ENCODE measurements at regions of chr4 and their contacts with region 1.

Region 1: DNA sequence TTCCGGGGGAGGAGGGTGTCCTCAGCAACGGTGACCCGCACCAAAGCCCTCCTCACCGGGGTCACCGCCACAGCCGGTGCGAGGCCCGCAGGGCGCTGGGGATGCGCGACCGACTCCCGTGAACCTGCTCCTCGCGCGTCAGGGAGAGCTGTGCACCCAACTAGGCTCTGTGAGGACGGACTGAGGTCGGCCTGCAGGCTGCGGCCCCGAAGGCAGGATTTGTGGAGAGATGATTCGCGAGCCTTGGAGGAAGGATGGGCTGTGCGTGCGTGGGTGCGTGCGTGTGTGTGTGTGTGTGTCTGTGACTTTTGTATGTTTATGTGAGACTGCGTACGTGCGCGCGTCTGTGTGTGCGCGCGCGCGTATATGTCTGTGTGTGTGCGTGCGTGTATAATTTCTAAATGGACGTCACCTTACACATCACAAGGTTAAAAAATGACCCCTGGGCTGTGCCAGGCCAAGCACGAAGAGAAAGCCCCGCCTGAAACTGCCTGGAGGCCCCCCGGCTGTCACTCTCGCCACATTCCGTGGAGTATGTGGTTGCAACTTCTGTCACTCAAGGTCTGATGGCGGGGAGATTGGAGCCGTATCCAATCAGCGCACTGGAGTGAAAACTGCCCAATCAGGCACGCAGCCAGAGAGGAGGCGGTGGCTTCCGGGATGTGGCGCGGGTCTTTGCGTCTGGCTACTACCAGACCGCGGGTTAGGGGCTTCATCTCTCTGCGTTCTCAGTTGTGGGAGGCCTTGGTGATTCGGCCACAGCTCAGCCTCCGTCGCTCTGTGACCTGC is at the start of gene ZNF141:
- DNase-seq: peak; percentile 81 to 97 (median 87)
- ATAC-seq: peak; percentile 87
- H3K4me3 ChIP-seq: peak within 1 kb of the TSS; percentile 98
- H3K4me3 Mint-ChIP-seq: peak within 1 kb of the TSS; percentile 94
- H3K27ac ChIP-seq: peak within 1 kb of the TSS; percentile 85 to 91
- H3K27ac Mint-ChIP-seq: peak within 1 kb of the TSS; percentile 98
- H3K4me1 ChIP-seq: peaks cover 27% of the 10 kb centered on the region
- H3K4me1 Mint-ChIP-seq: peaks cover 51% of the 10 kb centered on the region
- H3K27me3 ChIP-seq: no peaks in the 10 kb centered on the region
- H3K27me3 Mint-ChIP-seq: no peaks in the 10 kb centered on the region
- CTCF ChIP-seq: no peak
- total RNA-seq, gene ZNF141: 13.6 to 13.7 TPM

Region 2: DNA sequence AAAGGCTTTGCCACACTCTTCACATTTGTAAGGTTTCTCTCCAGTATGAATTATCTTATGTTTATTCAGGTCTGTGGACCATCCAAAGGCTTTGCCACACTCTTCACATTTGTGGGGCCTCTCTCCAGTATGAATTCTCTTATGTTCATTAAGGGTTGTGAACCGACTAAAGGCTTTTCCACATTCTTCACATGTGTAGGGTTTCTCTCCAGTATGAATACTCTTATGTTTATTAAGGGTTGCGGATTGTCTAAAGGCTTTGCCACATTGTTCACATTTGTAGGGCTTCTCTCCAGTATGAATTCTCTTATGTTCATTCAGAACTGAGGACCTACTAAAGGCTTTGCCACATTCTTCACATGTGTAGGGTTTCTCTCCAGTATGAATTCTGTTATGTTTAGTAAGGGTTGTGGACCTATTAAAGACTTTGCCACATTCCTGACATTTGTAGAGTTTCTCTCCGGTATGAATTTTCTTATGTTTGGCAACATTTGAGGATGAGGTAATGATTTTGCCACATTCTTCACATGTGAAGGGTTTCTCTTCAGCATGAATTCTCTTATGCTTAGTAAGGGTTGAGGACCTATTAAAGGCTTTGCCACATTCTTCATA is 65.7 kb before region 1 on chr4:
- CTCF ChIA-PET with region 1: no interaction called
- POLR2A ChIA-PET with region 1: no interaction called
- intact Hi-C with region 1: no loop called
- DNase-seq: no peak
- ATAC-seq: no peak
- H3K4me3 ChIP-seq: no peak overlapping the region
- H3K4me3 Mint-ChIP-seq: no peak overlapping the region
- H3K27ac ChIP-seq: no peak overlapping the region
- H3K27ac Mint-ChIP-seq: no peak overlapping the region
- H3K4me1 ChIP-seq: no peaks in the 10 kb centered on the region
- H3K4me1 Mint-ChIP-seq: no peaks in the 10 kb centered on the region
- H3K27me3 ChIP-seq: no peaks in the 10 kb centered on the region
- H3K27me3 Mint-ChIP-seq: no peaks in the 10 kb centered on the region
- CTCF ChIP-seq: no peak

Region 3: DNA sequence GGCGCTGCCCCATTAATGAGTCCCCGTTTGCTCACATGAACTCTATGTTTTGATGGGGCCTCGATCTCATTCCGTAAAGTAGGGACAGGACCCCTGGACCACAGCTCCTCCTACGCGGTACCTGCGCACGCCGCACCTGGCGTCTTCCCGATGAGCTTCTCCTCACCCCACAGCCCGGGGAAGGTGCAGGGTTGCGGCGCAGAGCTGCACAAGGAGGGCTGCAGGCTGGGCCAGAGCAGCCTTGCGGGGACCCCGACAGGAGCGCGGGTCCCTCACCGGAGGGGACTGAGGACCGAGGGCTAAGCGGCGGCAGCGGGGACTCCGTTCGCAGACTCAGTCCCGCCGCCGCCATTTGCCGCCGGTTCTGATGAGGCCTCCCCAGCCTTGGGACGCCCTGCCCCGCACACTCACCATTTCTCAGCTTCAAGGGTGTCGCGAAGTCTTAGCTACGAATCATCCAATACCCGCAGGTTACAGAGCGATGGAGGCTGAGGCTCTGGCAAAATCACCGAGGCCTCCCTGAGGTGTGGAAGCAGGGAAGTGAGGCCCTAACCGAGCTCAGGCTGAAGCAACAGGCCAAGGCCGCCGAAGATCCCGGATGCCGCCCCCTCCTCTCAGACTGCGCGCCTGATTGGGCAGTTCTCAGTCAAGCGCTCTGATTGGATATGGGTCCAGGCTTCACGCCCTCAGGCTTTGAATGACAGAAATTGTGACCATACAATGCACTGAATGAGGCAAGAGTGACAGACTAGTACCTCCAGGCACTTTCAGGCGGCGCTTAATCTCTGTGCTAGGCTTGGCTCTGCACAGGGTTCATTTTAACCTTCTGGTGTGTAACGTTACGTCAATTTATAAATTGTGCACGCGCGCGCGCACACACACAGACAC is 136.5 kb after region 1 on chr4:
- CTCF ChIA-PET with region 1: interaction called, 3 read pairs
- POLR2A ChIA-PET with region 1: interaction called, 40 read pairs
- intact Hi-C with region 1: loop called in 1 of 2 experiments (anchors 2 kb)
- DNase-seq: peak; percentile 84 to 99 (median 89)
- ATAC-seq: peak; percentile 97
- H3K4me3 ChIP-seq: peak overlapping the region; percentile 82
- H3K4me3 Mint-ChIP-seq: peak overlapping the region; percentile 98
- H3K27ac ChIP-seq: peak overlapping the region; percentile 81 to 93
- H3K27ac Mint-ChIP-seq: peak overlapping the region; percentile 100
- H3K4me1 ChIP-seq: peaks cover 17% of the 10 kb centered on the region
- H3K4me1 Mint-ChIP-seq: peaks cover 43% of the 10 kb centered on the region
- H3K27me3 ChIP-seq: no peaks in the 10 kb centered on the region
- H3K27me3 Mint-ChIP-seq: no peaks in the 10 kb centered on the region
- CTCF ChIP-seq: no peak

Region 4: DNA sequence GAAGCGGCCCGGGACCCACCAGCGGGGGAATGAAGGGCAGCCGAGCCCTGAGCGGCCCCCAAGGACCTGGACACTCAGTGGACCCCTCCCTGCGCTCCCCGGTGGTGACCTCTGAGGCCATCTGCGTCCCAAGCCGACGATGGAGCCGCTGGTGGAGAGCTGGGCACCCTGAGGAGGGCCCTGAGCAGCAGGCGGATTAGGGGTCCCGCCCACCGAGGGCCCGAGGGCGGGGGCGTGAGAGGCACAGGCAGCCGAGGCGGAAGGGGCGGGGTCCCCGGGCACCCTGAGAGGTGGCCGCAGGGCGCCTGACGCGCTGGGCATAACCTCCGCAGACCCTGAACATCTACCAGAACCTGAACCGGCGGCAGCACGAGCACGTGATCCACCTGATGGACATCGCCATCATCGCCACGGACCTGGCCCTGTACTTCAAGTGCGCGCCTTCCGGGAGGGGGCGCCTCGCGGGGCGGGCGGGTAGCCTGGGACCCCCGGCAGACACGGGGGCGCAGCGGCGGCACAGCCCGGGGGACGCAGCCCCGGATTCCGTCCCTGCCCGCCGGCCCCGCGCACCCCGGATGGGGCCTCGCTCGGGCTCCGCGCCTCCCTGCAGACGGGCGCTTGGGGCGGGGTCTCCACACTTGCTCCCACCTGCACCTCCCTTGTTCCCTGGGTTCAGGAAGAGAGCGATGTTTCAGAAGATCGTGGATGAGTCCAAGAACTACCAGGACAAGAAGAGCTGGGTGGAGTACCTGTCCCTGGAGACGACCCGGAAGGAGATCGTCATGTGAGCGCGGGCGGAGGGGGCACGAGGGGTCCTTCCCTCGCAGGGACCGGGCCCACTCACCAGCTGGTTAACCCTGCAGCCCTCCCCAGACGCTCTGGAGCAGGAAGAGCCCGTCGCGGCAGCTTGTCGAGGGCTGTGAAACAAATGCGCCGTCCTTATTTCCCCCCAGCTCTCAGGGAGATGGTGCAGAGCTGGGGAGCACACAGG is 326.4 kb after region 1 on chr4:
- CTCF ChIA-PET with region 1: no interaction called
- POLR2A ChIA-PET with region 1: interaction called, 3 read pairs
- intact Hi-C with region 1: loop called in 1 of 2 experiments (anchors 5 kb)
- DNase-seq: peak; percentile 60 to 84 (median 76)
- ATAC-seq: peak; percentile 87
- H3K4me3 ChIP-seq: peak overlapping the region; percentile 86
- H3K4me3 Mint-ChIP-seq: peak overlapping the region; percentile 88
- H3K27ac ChIP-seq: peak overlapping the region; percentile 59 to 62
- H3K27ac Mint-ChIP-seq: peak overlapping the region; percentile 80
- H3K4me1 ChIP-seq: peaks cover 22% of the 10 kb centered on the region
- H3K4me1 Mint-ChIP-seq: peaks cover 10% of the 10 kb centered on the region
- H3K27me3 ChIP-seq: no peaks in the 10 kb centered on the region
- H3K27me3 Mint-ChIP-seq: no peaks in the 10 kb centered on the region
- CTCF ChIP-seq: no peak